Upper lobe of right lung (tissue), 1 donor: ENCODE measurements at regions of chr15 and their contacts with region 1.

Region 1: DNA sequence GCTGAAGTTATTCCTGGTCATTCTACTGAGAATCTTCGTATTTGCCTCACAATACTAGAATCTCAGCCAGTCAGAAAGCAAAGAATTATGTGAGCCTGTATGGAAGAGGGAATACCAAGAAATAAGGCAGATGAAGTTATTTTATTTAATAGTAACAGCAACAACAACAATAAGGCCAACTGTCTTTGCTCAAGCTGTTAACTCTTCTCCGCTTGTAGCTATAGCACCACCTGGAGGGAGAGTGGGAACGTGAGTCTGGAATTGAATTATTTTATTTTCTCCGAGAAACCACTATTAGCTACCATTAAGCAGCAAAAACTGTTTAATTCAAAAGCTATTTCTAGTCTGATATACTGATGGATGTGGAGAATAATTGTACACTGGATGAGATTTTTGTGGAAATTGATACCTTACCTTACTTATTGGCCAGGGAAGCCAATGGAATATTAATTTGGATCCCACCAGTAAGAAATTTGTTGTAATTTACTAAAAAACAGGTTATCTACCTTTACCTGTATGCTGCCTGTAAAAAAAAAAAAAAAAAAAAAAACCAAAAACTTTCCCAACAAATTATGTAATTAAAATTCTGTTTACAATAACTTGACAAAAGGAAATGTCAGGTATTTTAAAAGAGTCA is 50.1 kb downstream of the CALML4 start:
- DNase-seq: no peak
- ATAC-seq: peak; percentile 77
- H3K4me3 ChIP-seq: no peak overlapping the region
- H3K27ac ChIP-seq: no peak overlapping the region
- H3K4me1 ChIP-seq: no peaks in the 10 kb centered on the region
- H3K27me3 ChIP-seq: no peaks in the 10 kb centered on the region
- CTCF ChIP-seq: peak; percentile 76

Region 2: DNA sequence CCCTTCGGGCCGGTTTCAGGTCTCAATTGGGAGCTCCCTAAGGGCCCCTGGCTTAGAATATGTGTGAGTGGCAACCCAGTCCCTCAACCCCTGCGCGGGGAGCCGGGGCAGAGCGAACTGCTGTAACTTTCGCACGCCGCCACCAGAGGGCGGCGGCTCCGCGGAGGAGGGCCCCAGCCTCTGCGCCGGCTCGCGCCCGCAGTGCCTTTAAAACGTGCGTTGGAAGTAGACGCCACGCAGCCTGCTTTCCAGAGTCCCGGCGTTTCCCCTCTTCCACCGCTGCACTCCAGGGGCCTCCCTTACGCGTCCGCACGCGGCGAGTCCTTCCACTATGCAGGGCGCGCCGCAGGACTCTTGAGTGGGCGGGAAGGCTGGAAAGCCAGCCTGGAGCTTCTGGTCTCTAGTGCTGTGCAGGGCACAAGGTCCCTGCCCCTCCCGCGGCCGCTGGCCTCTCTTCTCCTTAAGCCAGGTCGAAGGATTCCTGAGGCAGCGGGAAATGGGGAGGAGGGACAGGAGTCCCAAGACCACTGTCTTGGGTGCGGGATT is 291.5 kb before region 1 on chr15:
- intact Hi-C with region 1: loop called (anchors 5 kb)
- DNase-seq: peak; percentile 92
- ATAC-seq: peak; percentile 98
- H3K4me3 ChIP-seq: peak overlapping the region; percentile 50
- H3K27ac ChIP-seq: peak overlapping the region; percentile 20
- H3K4me1 ChIP-seq: peaks cover 12% of the 10 kb centered on the region
- H3K27me3 ChIP-seq: no peaks in the 10 kb centered on the region
- CTCF ChIP-seq: peak; percentile 96